ENCODE measurements at regions of chr5 and their contacts with region 1.

Region 1: GRCh38 chr5:176447982-176448608 is at the start of gene FAF2:
- DNase-seq: peak; percentile 94 to 100 (median 98)
- ATAC-seq: peak; percentile 96
- H3K4me3 ChIP-seq: peak within 1 kb of the TSS; percentile 75 to 86
- H3K4me3 Mint-ChIP-seq: peak within 1 kb of the TSS; percentile 99
- H3K27ac ChIP-seq: peak within 1 kb of the TSS; percentile 89 to 90
- H3K27ac Mint-ChIP-seq: peak within 1 kb of the TSS; percentile 99
- H3K4me1 ChIP-seq: peaks cover 26% of the 10 kb centered on the region
- H3K4me1 Mint-ChIP-seq: peaks cover 38% of the 10 kb centered on the region
- H3K27me3 ChIP-seq: no peaks in the 10 kb centered on the region
- H3K27me3 Mint-ChIP-seq: no peaks in the 10 kb centered on the region
- CTCF ChIP-seq: peak; percentile 92
- total RNA-seq, gene FAF2: 24.7 to 24.8 TPM

Region 2: GRCh38 chr5:176361437-176362232 is 86.5 kb before region 1 on chr5 and contains the start of gene KIAA1191:
- CTCF ChIA-PET with region 1: no interaction called
- POLR2A ChIA-PET with region 1: interaction called, 13 read pairs
- intact Hi-C with region 1: loop called (anchors 1 to 5 kb)
- DNase-seq: peak; percentile 91 to 98 (median 95)
- ATAC-seq: peak; percentile 89
- H3K4me3 ChIP-seq: peak within 1 kb of the TSS; percentile 72 to 96
- H3K4me3 Mint-ChIP-seq: peak within 1 kb of the TSS; percentile 98
- H3K27ac ChIP-seq: peak within 1 kb of the TSS; percentile 68 to 86
- H3K27ac Mint-ChIP-seq: peak within 1 kb of the TSS; percentile 98
- H3K4me1 ChIP-seq: peaks cover 31% of the 10 kb centered on the region
- H3K4me1 Mint-ChIP-seq: peaks cover 41% of the 10 kb centered on the region
- H3K27me3 ChIP-seq: no peaks in the 10 kb centered on the region
- H3K27me3 Mint-ChIP-seq: no peaks in the 10 kb centered on the region
- CTCF ChIP-seq: no peak
- total RNA-seq, gene KIAA1191: 78.2 to 85.1 TPM

Region 3: DNA sequence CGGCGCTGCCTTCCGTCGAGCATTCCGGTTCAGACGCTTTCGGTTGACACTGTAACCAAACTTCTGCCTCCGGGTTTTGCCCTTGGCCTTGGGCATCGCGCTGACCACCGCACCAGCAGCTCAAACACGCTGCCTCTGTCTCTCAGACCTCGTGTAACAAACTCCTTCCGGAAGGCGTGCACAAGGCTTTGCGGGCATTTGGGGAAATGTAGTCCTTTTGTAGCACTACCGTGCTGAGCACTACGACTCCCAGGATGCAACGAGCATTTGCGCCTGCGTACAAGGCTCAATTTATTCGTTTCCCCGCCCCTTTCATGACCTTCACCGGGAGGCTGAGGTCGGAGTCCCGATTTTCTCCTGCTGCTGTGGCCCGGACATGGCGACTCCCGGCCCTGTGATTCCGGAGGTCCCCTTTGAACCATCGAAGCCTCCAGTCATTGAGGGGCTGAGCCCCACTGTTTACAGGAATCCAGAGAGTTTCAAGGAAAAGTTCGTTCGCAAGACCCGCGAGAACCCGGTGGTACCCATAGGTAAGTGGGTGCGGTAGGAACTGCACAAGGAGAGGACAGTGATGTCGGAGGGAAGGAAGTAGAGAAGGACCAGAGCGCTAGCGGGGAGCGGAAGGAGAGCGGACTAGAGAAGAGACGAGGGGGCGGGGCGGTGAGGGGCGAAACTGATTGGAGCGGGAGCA is 59.5 kb before region 1 on chr5 and contains the starts of genes HIGD2A and NOP16:
- CTCF ChIA-PET with region 1: no interaction called
- POLR2A ChIA-PET with region 1: interaction called, 8 read pairs
- intact Hi-C with region 1: loop called (anchors 1 kb)
- DNase-seq: peak; percentile 97 to 100 (median 99)
- ATAC-seq: peak; percentile 90
- H3K4me3 ChIP-seq: peak within 1 kb of the TSS; percentile 87 to 89
- H3K4me3 Mint-ChIP-seq: peak within 1 kb of the TSS; percentile 99
- H3K27ac ChIP-seq: peak within 1 kb of the TSS; percentile 90 to 93
- H3K27ac Mint-ChIP-seq: peak within 1 kb of the TSS; percentile 99
- H3K4me1 ChIP-seq: peaks cover 22% of the 10 kb centered on the region
- H3K4me1 Mint-ChIP-seq: peaks cover 36% of the 10 kb centered on the region
- H3K27me3 ChIP-seq: no peaks in the 10 kb centered on the region
- H3K27me3 Mint-ChIP-seq: no peaks in the 10 kb centered on the region
- CTCF ChIP-seq: no peak
- total RNA-seq, gene HIGD2A: 102 to 106 TPM
- total RNA-seq, gene NOP16: 21.6 to 24.2 TPM

Region 4: GRCh38 chr5:176530983-176531821 is 83.1 kb after region 1 on chr5:
- CTCF ChIA-PET with region 1: interaction called, 7 read pairs
- POLR2A ChIA-PET with region 1: interaction called, 75 read pairs
- intact Hi-C with region 1: loop called in 1 of 2 experiments (anchors 2 kb)
- DNase-seq: peak in 3 of 9 experiments; percentile 28 to 42 (median 32)
- ATAC-seq: no peak
- H3K4me3 ChIP-seq: peak overlapping the region; percentile 41 to 46
- H3K4me3 Mint-ChIP-seq: peak overlapping the region; percentile 78
- H3K27ac ChIP-seq: peak overlapping the region; percentile 32 to 69
- H3K27ac Mint-ChIP-seq: peak overlapping the region; percentile 91
- H3K4me1 ChIP-seq: peaks cover 79% of the 10 kb centered on the region
- H3K4me1 Mint-ChIP-seq: peaks cover 65% of the 10 kb centered on the region
- H3K27me3 ChIP-seq: no peaks in the 10 kb centered on the region
- H3K27me3 Mint-ChIP-seq: no peaks in the 10 kb centered on the region
- CTCF ChIP-seq: no peak

Measured in CD8-positive, alpha-beta T cell (primary cell).